ENCODE measurements at regions of chr5 and their contacts with region 1.

Region 1: DNA sequence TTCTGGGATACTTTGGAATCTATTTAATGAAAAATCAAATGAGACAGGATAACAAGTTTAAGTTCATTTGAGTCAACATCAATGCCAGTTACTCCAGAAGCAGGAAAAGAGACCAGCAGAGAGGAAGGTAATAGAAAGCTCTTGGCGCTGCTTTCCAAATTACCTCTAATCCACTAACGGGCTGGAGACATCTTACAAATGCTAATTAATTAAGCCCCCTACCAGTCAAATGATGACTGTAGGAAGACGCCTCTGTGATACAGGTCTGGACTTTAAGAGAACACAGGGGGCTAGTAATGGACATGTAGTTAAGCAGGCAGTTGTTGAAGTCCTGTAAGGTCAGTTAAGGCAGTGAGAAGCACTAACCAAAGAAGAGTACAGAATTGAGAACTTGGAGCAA is 65.3 kb upstream of the HTR4 start:
- DNase-seq: no peak
- H3K4me3 ChIP-seq: no peak overlapping the region
- H3K27ac ChIP-seq: no peak overlapping the region
- H3K4me1 ChIP-seq: no peaks in the 10 kb centered on the region
- H3K27me3 ChIP-seq: peaks cover 86% of the 10 kb centered on the region
- CTCF ChIP-seq: no peak

Region 2: GRCh38 chr5:148191010-148191409 is 528.6 kb before region 1 on chr5:
- CTCF ChIA-PET with region 1: no interaction called
- POLR2A ChIA-PET with region 1: no interaction called
- intact Hi-C with region 1: loop called (anchors 5 kb)
- DNase-seq: no peak
- H3K4me3 ChIP-seq: no peak overlapping the region
- H3K27ac ChIP-seq: no peak overlapping the region
- H3K4me1 ChIP-seq: no peaks in the 10 kb centered on the region
- H3K27me3 ChIP-seq: peaks cover 38% of the 10 kb centered on the region
- CTCF ChIP-seq: no peak

Measured in A673 (cell line).